ENCODE measurements at regions of chr9 and their contacts with region 1.

Region 1: GRCh38 chr9:27529316-27530278 is at the start of gene MOB3B:
- DNase-seq: peak; percentile 66
- H3K4me3 Mint-ChIP-seq: peak within 1 kb of the TSS; percentile 85
- H3K27ac Mint-ChIP-seq: peak within 1 kb of the TSS; percentile 61
- H3K4me1 Mint-ChIP-seq: peaks cover 4% of the 10 kb centered on the region
- H3K27me3 Mint-ChIP-seq: peaks cover 49% of the 10 kb centered on the region
- total RNA-seq, gene MOB3B: 0.17 and 0.26 TPM in 2 replicates

Region 2: DNA sequence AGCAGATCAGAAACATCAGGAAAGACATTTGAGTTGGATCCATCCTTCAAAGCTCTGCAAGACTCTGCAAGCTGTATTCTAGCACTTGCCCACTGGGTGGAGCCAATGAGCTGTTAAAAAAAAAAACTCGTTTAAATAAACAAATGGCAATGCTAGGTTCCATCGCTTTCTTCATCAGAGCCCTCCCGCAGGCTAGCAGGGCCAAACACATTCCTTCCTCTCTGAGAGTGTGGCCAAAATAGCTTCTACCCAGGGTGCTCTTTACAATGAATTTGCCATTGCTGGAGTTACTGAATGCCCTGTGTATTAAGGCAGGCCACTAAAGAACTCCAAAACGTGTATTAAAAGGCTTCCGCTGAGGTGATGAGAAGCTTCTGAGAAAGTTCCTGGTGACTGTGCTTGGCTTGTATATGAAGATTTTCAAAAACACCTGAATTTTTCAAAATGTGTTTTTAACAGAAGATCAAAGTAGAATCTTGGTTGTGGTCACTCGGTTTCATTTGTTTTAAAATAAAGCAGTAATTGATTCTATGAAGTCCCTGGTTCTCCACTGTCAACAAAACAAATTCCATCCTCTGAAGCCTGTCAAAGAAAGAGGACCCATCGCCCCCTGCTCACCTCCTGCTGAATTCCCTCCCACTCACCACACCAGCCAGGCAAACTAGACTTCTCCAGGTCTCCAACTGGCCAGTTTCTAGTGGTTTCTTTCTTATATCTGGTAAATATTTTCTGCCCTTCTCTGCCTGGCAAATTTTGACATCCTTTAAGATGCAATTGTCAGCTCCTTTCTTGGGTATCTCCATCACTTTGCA is 196.2 kb before region 1 on chr9:
- intact Hi-C with region 1: loop called (anchors 1 kb)
- DNase-seq: peak; percentile 37
- H3K4me3 Mint-ChIP-seq: no peak overlapping the region
- H3K27ac Mint-ChIP-seq: no peak overlapping the region
- H3K4me1 Mint-ChIP-seq: peaks cover 10% of the 10 kb centered on the region
- H3K27me3 Mint-ChIP-seq: peaks cover 8% of the 10 kb centered on the region

Region 3: GRCh38 chr9:27441741-27442070 is 87.9 kb before region 1 on chr9:
- intact Hi-C with region 1: loop called (anchors 5 kb)
- DNase-seq: no peak
- H3K4me3 Mint-ChIP-seq: no peak overlapping the region
- H3K27ac Mint-ChIP-seq: no peak overlapping the region
- H3K4me1 Mint-ChIP-seq: no peaks in the 10 kb centered on the region
- H3K27me3 Mint-ChIP-seq: peaks cover under 1% of the 10 kb centered on the region

Region 4: GRCh38 chr9:27499481-27499880 is 30.1 kb before region 1 on chr9:
- intact Hi-C with region 1: loop called (anchors 1 kb)
- DNase-seq: no peak
- H3K4me3 Mint-ChIP-seq: no peak overlapping the region
- H3K27ac Mint-ChIP-seq: no peak overlapping the region
- H3K4me1 Mint-ChIP-seq: peaks cover 22% of the 10 kb centered on the region
- H3K27me3 Mint-ChIP-seq: peaks cover 2% of the 10 kb centered on the region

Measured in activated T-helper 1 cell treated with anti-CD3 and anti-CD28 coated beads, Interleukin-12 subunit alpha, Interleukin-12 subunit beta, Interleukin-2, Interleukin-4 antibody, amounts not matched to agents 30 ng/mL and 10 ng/mL and 1 ng/mL, durations not matched to agents 14 hours and 24 hours and 36 hours (primary cell).